ENCODE measurements at regions of chr4 and their contacts with region 1.

Region 1: DNA sequence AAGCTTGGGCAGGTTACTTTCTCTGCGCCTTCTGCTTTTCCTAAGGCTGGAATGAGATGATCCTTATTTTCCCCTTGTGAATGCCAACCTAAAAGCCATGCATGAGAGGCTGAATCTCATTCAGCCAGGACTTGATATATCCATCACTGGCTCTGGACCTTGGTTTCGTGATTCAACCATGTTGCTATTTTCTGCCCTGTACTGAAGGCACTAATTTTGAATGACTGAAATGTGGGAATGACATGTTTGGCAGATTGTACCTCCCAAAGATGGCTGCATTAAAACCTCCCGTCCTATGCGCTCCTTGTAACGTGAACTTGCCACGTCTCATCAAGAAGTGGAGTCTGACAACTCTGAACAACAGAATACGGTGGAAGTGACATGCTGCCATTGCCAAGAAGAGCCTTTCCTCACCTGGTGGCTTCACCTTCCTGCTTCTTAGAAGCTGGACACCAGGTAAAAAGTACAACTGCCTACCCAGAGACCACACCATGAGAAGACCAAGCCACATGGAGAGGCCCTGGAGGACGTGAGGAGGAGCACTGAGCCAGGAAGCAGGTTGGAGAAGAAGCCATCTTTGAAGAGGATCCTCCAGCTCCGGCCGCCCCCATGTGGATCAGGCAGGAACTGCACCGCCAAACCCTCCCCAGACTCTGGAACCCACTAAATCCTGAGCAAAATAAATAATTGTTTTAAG is 174.5 kb downstream of the NSUN7 start:
- DNase-seq: peak; percentile 79
- H3K4me3 Mint-ChIP-seq: no peak overlapping the region
- H3K27ac Mint-ChIP-seq: peak overlapping the region; percentile 60
- H3K4me1 Mint-ChIP-seq: peaks cover 3% of the 10 kb centered on the region
- H3K27me3 Mint-ChIP-seq: peaks cover 11% of the 10 kb centered on the region

Region 2: DNA sequence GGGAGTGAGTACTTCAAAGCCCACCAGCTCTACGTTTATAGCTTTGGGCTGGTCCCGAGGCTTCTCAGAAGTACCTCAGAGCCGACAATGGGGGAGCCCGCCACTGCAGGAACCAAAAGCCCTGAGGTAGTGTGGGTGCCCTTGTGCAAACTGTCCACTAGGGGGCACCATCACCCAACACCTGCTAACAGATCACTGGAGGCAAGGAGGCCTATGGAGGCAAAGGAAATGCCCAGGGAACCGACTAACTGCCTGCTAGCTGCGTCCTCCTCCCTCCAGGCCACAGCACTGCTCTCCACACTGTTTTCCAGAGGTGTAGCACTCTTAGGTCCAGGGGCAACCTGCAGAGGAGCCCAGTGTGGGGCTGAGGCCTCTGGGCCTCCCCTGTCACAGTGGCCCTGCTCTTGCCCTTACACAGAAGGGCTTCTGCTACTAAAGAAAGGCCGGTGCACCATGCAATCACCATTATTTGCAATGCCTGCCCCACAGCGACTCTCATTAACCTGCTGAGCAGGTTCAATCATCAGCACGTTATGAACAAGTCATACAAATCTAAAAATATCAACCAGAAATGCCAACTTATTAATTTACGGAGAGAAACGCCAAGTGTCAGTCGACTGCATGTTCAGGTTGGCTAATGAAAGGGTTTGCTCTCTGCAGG is 15.4 kb before region 1 on chr4:
- CTCF ChIA-PET with region 1: interaction called, 105 read pairs
- DNase-seq: peak; percentile 77
- H3K4me3 Mint-ChIP-seq: no peak overlapping the region
- H3K27ac Mint-ChIP-seq: no peak overlapping the region
- H3K4me1 Mint-ChIP-seq: peaks cover 12% of the 10 kb centered on the region
- H3K27me3 Mint-ChIP-seq: no peaks in the 10 kb centered on the region

Region 3: DNA sequence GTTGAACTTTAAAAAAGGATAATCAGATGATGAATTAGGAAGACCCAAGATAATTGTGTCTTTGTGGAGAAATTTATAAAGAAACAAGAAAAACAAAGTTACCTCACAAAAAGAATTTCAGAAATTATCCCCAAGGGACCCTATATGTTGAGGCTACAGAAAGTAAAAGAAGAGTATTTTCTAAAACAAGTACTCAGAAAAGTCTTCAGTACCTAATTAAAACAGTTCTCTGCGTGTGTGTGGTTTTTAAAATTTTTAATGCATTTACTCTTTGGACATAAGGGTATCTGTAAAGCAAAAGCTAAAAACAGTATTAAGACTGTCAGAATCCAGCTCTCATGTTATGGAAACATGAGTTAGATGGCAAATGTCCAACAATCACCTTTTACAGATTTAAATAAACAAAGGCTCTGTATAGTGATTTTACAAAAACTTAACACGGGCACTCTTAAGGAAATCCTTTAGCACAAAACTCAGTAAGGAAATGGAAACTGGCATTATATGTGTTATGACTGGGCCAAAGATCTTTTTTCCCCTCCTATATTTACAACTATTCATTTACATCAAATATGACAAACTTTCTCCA is 13.0 kb after region 1 on chr4:
- CTCF ChIA-PET with region 1: interaction called, 15 read pairs
- DNase-seq: no peak
- H3K4me3 Mint-ChIP-seq: no peak overlapping the region
- H3K27ac Mint-ChIP-seq: no peak overlapping the region
- H3K4me1 Mint-ChIP-seq: no peaks in the 10 kb centered on the region
- H3K27me3 Mint-ChIP-seq: peaks cover 9% of the 10 kb centered on the region

Region 4: DNA sequence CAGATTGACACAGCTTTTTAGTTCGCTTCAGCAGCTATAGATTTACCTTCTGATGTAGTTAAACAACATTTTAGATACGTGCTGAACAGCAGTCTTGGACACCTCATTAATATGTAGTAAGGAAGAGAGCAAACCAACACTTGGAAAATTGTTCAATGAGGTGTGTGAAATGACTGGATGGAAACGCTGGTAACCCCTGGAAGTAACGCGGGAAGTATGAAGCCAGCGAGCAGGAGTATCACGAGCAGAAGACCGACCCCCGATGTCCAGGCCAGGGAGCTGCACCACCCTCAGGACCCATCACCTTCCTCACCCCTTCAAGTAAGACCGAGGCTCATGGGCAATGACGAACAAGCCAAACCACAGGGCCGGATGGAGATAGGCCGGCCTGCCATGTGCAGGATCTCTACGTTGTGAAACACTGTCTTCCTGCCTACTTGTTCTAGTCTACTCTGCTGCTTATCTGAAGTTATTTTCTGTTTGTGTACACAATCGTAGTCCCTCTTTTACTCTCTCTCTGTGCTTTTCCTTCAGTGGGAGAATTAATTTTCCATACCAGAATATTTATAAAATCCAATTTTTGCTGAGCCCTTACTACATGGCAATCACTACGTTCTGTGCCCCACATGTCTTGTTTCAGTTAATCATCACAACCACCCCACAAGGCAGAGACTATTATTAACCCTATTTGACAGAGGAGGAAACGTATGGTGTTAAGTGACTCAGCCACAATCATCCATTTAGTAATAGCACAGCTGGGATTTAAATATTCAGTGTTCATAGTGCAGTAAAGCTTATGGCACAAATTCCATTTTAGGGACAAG is 68.4 kb after region 1 on chr4:
- CTCF ChIA-PET with region 1: no interaction called
- DNase-seq: no peak
- H3K4me3 Mint-ChIP-seq: no peak overlapping the region
- H3K27ac Mint-ChIP-seq: no peak overlapping the region
- H3K4me1 Mint-ChIP-seq: no peaks in the 10 kb centered on the region
- H3K27me3 Mint-ChIP-seq: peaks cover 3% of the 10 kb centered on the region